ENCODE measurements at regions of chr19 and their contacts with region 1.

Region 1: GRCh38 chr19:10717356-10718204 is at the start of gene DNM2:
- DNase-seq: peak; percentile 94 to 100 (median 97)
- ATAC-seq: peak; percentile 95
- H3K4me3 ChIP-seq: peak within 1 kb of the TSS; percentile 99
- H3K27ac ChIP-seq: peak within 1 kb of the TSS; percentile 95
- H3K4me1 ChIP-seq: peaks cover 18 to 48% of the 10 kb centered on the region in 2 experiments; a peak in 4 of 5 replicates
- H3K27me3 ChIP-seq: no peaks in the 10 kb centered on the region
- CTCF ChIP-seq: peak; percentile 84 to 94 (median 94)
- EP300 ChIP-seq: peak; percentile 39
- POLR2A ChIP-seq: no peak; the same call in 1 of the 2 replicates
- RAD21 ChIP-seq: peak; percentile 91 to 94
- polyA plus RNA-seq, gene DNM2: 2.2 to 2.4 TPM

Region 2: GRCh38 chr19:10670182-10670581 is 47.4 kb before region 1 on chr19:
- CTCF ChIA-PET with region 1: no interaction called
- POLR2A ChIA-PET with region 1: no interaction called
- in situ Hi-C with region 1: no loop called
- intact Hi-C with region 1: no loop called
- DNase-seq: no peak
- ATAC-seq: no peak
- H3K4me3 ChIP-seq: no peak overlapping the region
- H3K27ac ChIP-seq: no peak overlapping the region
- H3K4me1 ChIP-seq: no peaks in the 10 kb centered on the region; a peak in 1 of 5 replicates
- H3K27me3 ChIP-seq: no peaks in the 10 kb centered on the region
- CTCF ChIP-seq: no peak
- EP300 ChIP-seq: no peak
- POLR2A ChIP-seq: no peak
- RAD21 ChIP-seq: no peak

Region 3: DNA sequence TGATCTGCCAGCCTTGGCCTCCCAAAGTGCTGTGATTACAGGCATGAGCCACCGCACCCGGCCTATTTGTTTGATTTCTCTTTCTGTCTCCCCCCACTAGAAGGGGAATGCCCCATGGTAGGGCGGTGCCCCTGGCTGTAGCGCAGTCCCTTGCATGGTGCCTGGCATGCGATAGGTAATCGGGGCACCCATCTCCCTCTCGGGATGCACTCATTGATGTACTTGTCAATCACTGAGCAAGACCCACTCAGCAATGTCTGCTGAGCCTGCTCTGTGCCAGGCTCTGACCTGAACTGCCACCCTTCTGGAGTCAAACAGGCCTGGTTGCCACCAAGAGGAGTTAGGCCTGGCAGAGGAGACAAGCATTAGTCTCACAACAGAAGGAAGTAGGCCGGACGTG is 20.1 kb after region 1 on chr19:
- CTCF ChIA-PET with region 1: no interaction called
- POLR2A ChIA-PET with region 1: interaction called, 6 read pairs
- in situ Hi-C with region 1: no loop called
- intact Hi-C with region 1: loop called (anchors 2 kb)
- DNase-seq: peak in 1 of 4 experiments; percentile 2
- ATAC-seq: no peak
- H3K4me3 ChIP-seq: no peak overlapping the region
- H3K27ac ChIP-seq: peak overlapping the region; percentile 60; the same call in 2 of the 3 replicates
- H3K4me1 ChIP-seq: peaks cover 48 to 57% of the 10 kb centered on the region in 2 experiments
- H3K27me3 ChIP-seq: no peaks in the 10 kb centered on the region
- CTCF ChIP-seq: no peak
- EP300 ChIP-seq: no peak
- POLR2A ChIP-seq: no peak
- RAD21 ChIP-seq: no peak

Region 4: GRCh38 chr19:10756371-10756770 is 38.8 kb after region 1 on chr19:
- CTCF ChIA-PET with region 1: no interaction called
- POLR2A ChIA-PET with region 1: interaction called, 3 read pairs
- in situ Hi-C with region 1: no loop called
- intact Hi-C with region 1: loop called (anchors 5 kb)
- DNase-seq: no peak
- ATAC-seq: no peak
- H3K4me3 ChIP-seq: no peak overlapping the region
- H3K27ac ChIP-seq: no peak overlapping the region; the same call in 2 of the 3 replicates
- H3K4me1 ChIP-seq: peaks cover 42 to 58% of the 10 kb centered on the region in 2 experiments
- H3K27me3 ChIP-seq: no peaks in the 10 kb centered on the region
- CTCF ChIP-seq: no peak
- EP300 ChIP-seq: no peak
- POLR2A ChIP-seq: no peak
- RAD21 ChIP-seq: no peak

Region 5: DNA sequence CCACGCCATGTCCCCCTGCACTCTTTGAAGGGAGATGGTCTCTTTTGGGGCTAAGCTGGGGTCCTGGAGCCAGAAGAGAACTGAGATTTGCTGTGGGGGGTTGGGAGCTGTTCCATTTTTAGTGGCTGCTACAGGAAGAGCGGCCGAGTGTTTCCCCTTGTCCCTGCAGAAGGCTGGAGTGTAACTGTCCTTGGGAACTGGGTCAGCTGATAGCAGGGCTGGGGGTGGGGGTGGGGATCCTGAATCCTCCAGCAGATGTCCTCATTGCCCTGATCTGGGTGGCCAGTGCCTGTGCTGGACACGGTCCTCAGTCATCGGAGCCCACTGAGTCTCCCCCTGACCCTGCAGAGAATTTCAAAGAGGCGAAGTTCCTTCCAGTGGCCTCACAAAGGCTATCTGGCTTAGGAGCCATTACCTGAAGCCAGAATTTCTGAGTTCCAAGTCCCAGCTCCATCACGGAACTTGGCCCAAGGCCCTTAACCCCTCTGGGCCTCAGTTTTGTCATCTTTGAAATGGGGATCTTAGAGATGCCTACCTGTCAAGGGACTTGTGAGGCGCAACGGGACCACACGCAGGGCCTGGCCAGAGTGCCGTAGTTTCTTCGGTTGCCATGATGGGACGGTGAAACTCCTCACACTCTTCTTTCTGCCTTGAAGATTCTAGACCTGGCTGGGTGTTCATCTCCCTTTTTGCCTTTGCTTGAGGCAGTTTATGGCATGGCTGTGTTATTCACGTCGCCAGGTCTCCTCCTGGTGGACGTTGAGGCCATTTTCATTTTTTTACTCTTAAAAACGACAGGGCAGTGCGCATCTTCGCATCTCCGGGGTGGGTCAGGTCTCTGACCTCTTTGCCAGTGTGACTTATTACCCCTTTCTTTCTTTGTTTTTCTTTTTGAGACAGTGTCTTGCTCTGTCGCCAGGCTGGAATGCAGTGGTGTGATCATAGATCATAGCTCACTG is 52.2 kb after region 1 on chr19:
- CTCF ChIA-PET with region 1: no interaction called
- POLR2A ChIA-PET with region 1: interaction called, 3 read pairs
- in situ Hi-C with region 1: no loop called
- intact Hi-C with region 1: loop called (anchors 1 kb)
- DNase-seq: peak; percentile 44 to 63 (median 54)
- ATAC-seq: peak; percentile 90
- H3K4me3 ChIP-seq: no peak overlapping the region
- H3K27ac ChIP-seq: peak overlapping the region; percentile 38; the same call in 2 of the 3 replicates
- H3K4me1 ChIP-seq: peaks cover 9 to 25% of the 10 kb centered on the region in 2 experiments; a peak in 4 of 5 replicates
- H3K27me3 ChIP-seq: no peaks in the 10 kb centered on the region
- CTCF ChIP-seq: peak; percentile 36 to 59 (median 53); a peak in 5 of 6 replicates
- EP300 ChIP-seq: no peak
- POLR2A ChIP-seq: no peak
- RAD21 ChIP-seq: peak; percentile 36 to 55

Region 6: DNA sequence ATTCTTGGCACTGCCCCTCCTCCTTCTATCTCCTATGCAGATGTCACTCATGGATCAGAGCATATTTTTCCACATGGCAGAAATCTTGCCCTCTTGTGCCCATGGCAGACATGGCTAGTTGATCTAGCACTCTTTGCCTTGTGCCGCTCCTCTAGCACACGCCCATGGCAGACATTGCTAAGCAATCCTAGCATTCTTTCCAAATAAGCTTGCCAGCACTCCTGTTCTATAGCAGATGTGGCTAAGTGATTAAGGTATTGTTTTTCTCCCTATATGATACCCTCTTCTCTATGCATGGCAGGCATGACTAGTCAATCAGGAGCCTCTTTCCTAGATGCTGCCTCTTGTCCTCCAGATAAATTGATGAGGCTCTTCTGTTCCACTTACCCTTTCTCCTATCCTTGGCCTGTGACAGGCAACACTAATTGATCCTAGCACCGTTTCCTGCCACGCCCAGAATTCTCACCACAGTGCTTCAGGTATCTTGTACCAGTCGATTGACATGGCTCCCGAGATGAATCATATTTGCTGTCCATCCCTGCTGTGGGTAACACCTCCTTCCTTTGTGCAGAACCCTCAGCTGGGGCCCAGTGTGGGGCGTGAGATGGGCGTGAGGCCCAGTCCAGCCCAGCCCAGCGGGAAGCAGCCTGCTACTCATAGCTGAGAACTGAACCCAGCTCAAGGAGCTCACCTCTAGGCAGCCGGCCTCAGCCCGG is 91.5 kb after region 1 on chr19:
- CTCF ChIA-PET with region 1: no interaction called
- POLR2A ChIA-PET with region 1: interaction called, 7 read pairs
- in situ Hi-C with region 1: no loop called
- intact Hi-C with region 1: loop called (anchors 2 kb)
- DNase-seq: peak; percentile 43 to 71 (median 66)
- ATAC-seq: peak; percentile 51
- H3K4me3 ChIP-seq: no peak overlapping the region
- H3K27ac ChIP-seq: peak overlapping the region; percentile 4; the same call in 2 of the 3 replicates
- H3K4me1 ChIP-seq: peaks cover 48 to 53% of the 10 kb centered on the region in 2 experiments
- H3K27me3 ChIP-seq: no peaks in the 10 kb centered on the region
- CTCF ChIP-seq: no peak
- EP300 ChIP-seq: no peak
- POLR2A ChIP-seq: 0 out of 2 replicates have a peak, but pooled peaks have one; percentile 25
- RAD21 ChIP-seq: no peak

Region 7: GRCh38 chr19:10835754-10836477 is 118.3 kb after region 1 on chr19 and contains the start of gene TMED1:
- CTCF ChIA-PET with region 1: no interaction called
- POLR2A ChIA-PET with region 1: interaction called, 12 read pairs
- in situ Hi-C with region 1: no loop called
- intact Hi-C with region 1: loop called (anchors 1 kb)
- DNase-seq: peak; percentile 92 to 100 (median 98)
- ATAC-seq: peak; percentile 91
- H3K4me3 ChIP-seq: peak within 1 kb of the TSS; percentile 63
- H3K27ac ChIP-seq: peak within 1 kb of the TSS; percentile 97
- H3K4me1 ChIP-seq: peaks cover 17 to 51% of the 10 kb centered on the region in 2 experiments; a peak in 4 of 5 replicates
- H3K27me3 ChIP-seq: no peaks in the 10 kb centered on the region
- CTCF ChIP-seq: peak; percentile 9 to 22 (median 20); a peak in 1 of 6 replicates
- EP300 ChIP-seq: no peak
- POLR2A ChIP-seq: peak; percentile 94
- RAD21 ChIP-seq: peak in 1 of 2 experiments; percentile 23; a peak in 2 of 4 replicates
- polyA plus RNA-seq, gene TMED1: 0.86 to 5.9 TPM

Region 8: GRCh38 chr19:10864538-10864899 is 146.9 kb after region 1 on chr19:
- CTCF ChIA-PET with region 1: no interaction called
- POLR2A ChIA-PET with region 1: no interaction called
- in situ Hi-C with region 1: no loop called
- intact Hi-C with region 1: loop called (anchors 2 kb)
- DNase-seq: peak; percentile 83 to 92 (median 88)
- ATAC-seq: peak; percentile 91
- H3K4me3 ChIP-seq: no peak overlapping the region
- H3K27ac ChIP-seq: no peak overlapping the region; the same call in 2 of the 3 replicates
- H3K4me1 ChIP-seq: peaks cover 24 to 36% of the 10 kb centered on the region in 2 experiments; a peak in 4 of 5 replicates
- H3K27me3 ChIP-seq: no peaks in the 10 kb centered on the region
- CTCF ChIP-seq: peak; percentile 88 to 97 (median 93)
- EP300 ChIP-seq: no peak
- POLR2A ChIP-seq: no peak
- RAD21 ChIP-seq: peak; percentile 68 to 70